BJ (cell line): ENCODE measurements at regions of chr11 and their contacts with region 1.

Region 1: DNA sequence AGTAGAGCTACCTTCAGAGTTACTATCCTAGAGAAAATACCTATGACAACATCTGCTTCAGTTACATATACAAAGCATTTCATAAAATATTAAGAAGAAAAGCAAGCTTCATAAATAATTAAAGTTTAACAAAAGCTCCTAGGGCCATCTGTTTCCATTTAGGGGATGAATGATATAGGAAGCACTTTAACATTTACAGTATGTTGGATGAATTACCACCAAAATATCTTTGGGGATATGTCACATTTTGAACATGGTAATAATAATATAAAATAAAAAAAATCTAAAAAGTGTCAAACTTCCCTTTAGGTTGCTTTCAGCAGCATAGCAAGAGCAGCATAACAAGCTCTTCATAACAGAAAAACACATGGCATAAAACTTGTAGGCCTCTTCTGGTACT is 104.6 kb downstream of the ATG16L2 start:
- DNase-seq: no peak
- H3K4me3 ChIP-seq: no peak overlapping the region
- H3K27me3 ChIP-seq: no peaks in the 10 kb centered on the region
- CTCF ChIP-seq: no peak

Region 2: GRCh38 chr11:72781313-72782050 is 137.4 kb before region 1 on chr11:
- CTCF ChIA-PET with region 1: no interaction called
- POLR2A ChIA-PET with region 1: no interaction called
- DNase-seq: no peak
- H3K4me3 ChIP-seq: peak overlapping the region; percentile 46
- H3K27me3 ChIP-seq: 0 out of 2 replicates have a peak, but pooled peaks cover 1% of the 10 kb centered on the region
- CTCF ChIP-seq: no peak

Region 3: DNA sequence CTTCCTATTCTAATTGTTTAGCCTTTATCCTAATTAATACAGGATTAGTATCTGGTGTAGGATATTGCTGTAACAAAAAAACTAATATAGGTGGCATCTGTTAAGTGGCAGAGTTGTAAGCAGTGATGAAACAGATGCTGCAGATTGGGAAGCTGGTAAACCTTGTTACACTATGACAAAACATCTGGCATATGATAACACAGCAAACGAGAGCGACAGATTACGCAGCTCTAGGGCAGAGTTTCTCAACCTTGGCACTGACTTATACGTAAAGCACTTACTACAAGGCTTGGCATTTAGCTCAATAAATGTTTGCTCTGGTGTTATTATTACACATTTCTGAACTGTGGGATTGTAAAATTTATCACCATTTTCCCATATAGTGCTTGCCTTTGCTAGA is 32.3 kb after region 1 on chr11:
- CTCF ChIA-PET with region 1: no interaction called
- POLR2A ChIA-PET with region 1: no interaction called
- DNase-seq: no peak
- H3K4me3 ChIP-seq: no peak overlapping the region
- H3K27me3 ChIP-seq: no peaks in the 10 kb centered on the region
- CTCF ChIP-seq: no peak

Region 4: DNA sequence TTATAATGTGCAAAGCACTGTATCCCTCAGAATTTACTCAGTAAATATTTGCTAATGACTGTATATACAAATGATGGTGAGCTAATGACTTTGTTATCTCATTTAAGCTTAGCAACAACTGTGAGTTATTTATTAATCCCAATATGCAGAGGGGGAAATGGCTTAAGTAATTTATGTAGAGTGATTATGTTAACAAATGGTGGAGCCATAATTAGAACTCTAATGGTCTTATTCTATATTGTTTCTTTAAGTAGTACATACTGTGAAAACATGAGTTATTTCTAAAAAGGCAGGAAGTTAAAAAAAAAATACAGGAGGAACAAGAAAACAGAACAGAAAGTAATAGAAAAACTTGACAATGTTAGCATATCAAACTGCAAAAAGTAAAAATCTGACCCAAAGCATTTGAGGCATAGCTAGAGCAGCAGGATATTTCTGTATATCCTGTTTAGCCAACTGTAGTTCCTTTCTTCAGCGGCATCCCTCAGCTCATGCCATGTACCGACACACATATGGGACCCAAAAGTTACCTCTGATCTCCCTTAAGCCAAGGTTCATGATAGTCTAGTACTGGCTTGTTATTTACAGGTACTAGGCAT is 129.0 kb after region 1 on chr11:
- CTCF ChIA-PET with region 1: no interaction called
- POLR2A ChIA-PET with region 1: interaction called, 17 read pairs
- DNase-seq: no peak
- H3K4me3 ChIP-seq: no peak overlapping the region
- H3K27me3 ChIP-seq: no peaks in the 10 kb centered on the region
- CTCF ChIP-seq: no peak